A549 (cell line): ENCODE measurements at regions of chr11 and their contacts with region 1.

Region 1: DNA sequence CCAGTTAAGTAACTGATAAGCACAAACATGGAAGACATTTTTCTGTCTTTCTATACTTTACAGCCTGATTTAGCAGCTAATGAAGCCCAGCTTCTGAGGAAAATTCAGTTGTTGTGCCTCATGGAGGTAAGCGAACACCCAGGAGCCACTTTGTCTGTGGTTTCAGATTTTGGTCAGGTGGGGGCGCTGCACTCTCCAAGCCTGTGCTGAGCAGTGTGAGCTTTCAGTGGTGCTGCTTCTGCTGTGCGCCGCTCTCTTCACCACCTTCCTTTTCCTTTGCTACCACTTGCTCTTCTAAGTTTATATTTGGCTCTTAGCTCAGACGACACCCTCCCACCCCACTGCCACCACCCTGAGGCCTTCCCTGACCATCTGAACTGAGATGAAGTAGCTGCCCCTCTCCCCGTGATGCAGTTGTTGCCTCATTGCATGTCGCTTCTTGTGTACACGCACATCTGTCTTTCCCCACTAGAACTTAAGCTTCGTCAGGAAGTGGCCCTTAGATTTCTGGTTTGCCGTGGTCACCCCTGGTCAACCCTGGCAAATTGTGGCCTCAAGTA is 14.0 kb downstream of the PSMD13 start:
- DNase-seq: peak; percentile 30 to 63
- ATAC-seq: peak; percentile 86 to 93
- H3K4me3 ChIP-seq: no peak overlapping the region
- H3K27ac ChIP-seq: no peak overlapping the region
- H3K4me1 ChIP-seq: no peaks in the 10 kb centered on the region
- CTCF ChIP-seq: peak; percentile 64
- EP300 ChIP-seq: no peak
- POLR2A ChIP-seq: no peak
- RAD21 ChIP-seq: peak; percentile 42 to 49; a peak in 4 of 5 replicates

Region 2: GRCh38 chr11:196786-197719 is 53.8 kb before region 1 on chr11:
- CTCF ChIA-PET with region 1: no interaction called
- POLR2A ChIA-PET with region 1: no interaction called
- DNase-seq: no peak
- ATAC-seq: peak in 1 of 2 experiments; percentile 20; a peak in 3 of 6 replicates
- H3K4me3 ChIP-seq: no peak overlapping the region
- H3K27ac ChIP-seq: no peak overlapping the region
- H3K4me1 ChIP-seq: no peaks in the 10 kb centered on the region
- CTCF ChIP-seq: no peak
- EP300 ChIP-seq: no peak
- POLR2A ChIP-seq: no peak
- RAD21 ChIP-seq: no peak

Region 3: GRCh38 chr11:279966-280582 is 29.3 kb after region 1 on chr11:
- CTCF ChIA-PET with region 1: interaction called, 13 read pairs
- POLR2A ChIA-PET with region 1: no interaction called
- DNase-seq: peak in 1 of 2 experiments; percentile 48
- ATAC-seq: peak; percentile 52 to 65
- H3K4me3 ChIP-seq: peak overlapping the region; percentile 33
- H3K27ac ChIP-seq: 0 out of 6 replicates have a peak overlapping the region, but pooled peaks of 1 of the 2 experiments have one; percentile 6
- H3K4me1 ChIP-seq: peaks cover 14% of the 10 kb centered on the region; the same call in 1 of the 3 replicates
- CTCF ChIP-seq: no peak
- EP300 ChIP-seq: no peak
- POLR2A ChIP-seq: no peak
- RAD21 ChIP-seq: no peak

Region 4: DNA sequence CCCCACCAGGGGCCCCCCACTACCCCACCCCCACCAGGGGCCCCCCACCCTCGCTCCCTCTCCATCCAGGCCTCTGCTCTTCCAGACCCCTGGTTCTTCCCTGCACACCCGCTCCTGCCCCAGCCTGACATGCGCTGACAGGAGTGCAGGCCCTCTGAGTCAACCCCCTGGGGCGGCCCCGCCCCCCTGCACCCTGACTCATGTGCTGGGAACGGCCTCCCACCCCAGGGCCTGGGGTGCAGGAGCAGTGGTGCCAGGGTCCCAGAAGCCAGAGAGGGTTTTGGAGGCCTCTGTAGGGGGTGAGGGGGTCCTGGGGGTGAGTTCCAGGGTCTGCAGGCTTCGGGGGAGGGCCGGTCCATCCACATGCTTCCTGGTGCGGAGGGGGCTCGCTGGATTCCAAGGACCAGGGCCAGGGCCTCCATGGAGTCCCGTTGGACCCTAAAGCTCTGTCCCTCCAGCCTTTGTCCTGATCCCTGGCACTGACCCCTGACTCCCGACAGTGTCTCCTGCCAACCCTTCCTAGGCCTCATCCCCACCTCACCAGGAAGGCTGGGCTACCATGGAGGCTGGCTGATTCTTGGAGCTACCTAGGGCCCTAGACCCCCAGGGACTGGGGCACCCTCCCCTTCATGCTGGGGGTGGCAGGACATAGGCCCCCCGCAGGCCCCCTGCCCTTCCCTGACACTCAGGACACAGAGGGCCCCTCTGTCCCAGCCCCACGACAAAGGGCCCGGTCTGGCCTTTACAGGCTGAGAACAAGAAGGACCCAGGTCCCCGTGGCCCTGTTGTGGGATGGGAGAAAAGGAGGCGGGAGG is 142.6 kb after region 1 on chr11:
- CTCF ChIA-PET with region 1: no interaction called
- POLR2A ChIA-PET with region 1: no interaction called
- DNase-seq: peak; percentile 77 to 97
- ATAC-seq: peak; percentile 59 to 77
- H3K4me3 ChIP-seq: peak overlapping the region; percentile 64
- H3K27ac ChIP-seq: peak overlapping the region; percentile 98 to 99
- H3K4me1 ChIP-seq: peaks cover 37% of the 10 kb centered on the region
- CTCF ChIP-seq: no peak
- EP300 ChIP-seq: no peak
- POLR2A ChIP-seq: peak; percentile 38
- RAD21 ChIP-seq: no peak

Region 5: GRCh38 chr11:441418-442274 is 190.8 kb after region 1 on chr11 and contains the start of gene ANO9:
- CTCF ChIA-PET with region 1: no interaction called
- POLR2A ChIA-PET with region 1: no interaction called
- DNase-seq: no peak
- ATAC-seq: peak in 1 of 2 experiments; percentile 37; a peak in 3 of 6 replicates
- H3K4me3 ChIP-seq: no peak within 1 kb of the TSS
- H3K27ac ChIP-seq: peak within 1 kb of the TSS in 1 of 2 experiments; percentile 74; a peak in 3 of 6 replicates
- H3K4me1 ChIP-seq: peaks cover 4% of the 10 kb centered on the region; the same call in 1 of the 3 replicates
- CTCF ChIP-seq: no peak
- EP300 ChIP-seq: no peak
- POLR2A ChIP-seq: no peak
- RAD21 ChIP-seq: no peak
- polyA plus RNA-seq, gene ANO9: 0.66 and 0.70 TPM in 2 replicates

Region 6: GRCh38 chr11:575996-576768 is 325.4 kb after region 1 on chr11 and contains the start of gene PHRF1:
- CTCF ChIA-PET with region 1: no interaction called
- POLR2A ChIA-PET with region 1: no interaction called
- DNase-seq: peak; percentile 95 to 98
- ATAC-seq: peak; percentile 90 to 91
- H3K4me3 ChIP-seq: peak within 1 kb of the TSS; percentile 91
- H3K27ac ChIP-seq: peak within 1 kb of the TSS; percentile 97 to 98
- H3K4me1 ChIP-seq: peaks cover 26% of the 10 kb centered on the region
- CTCF ChIP-seq: no peak
- EP300 ChIP-seq: no peak
- POLR2A ChIP-seq: peak; percentile 45
- RAD21 ChIP-seq: no peak
- polyA plus RNA-seq, gene PHRF1: 8.6 and 10.8 TPM in 2 replicates